ENCODE measurements at regions of chr3 and their contacts with region 1.

Region 1: DNA sequence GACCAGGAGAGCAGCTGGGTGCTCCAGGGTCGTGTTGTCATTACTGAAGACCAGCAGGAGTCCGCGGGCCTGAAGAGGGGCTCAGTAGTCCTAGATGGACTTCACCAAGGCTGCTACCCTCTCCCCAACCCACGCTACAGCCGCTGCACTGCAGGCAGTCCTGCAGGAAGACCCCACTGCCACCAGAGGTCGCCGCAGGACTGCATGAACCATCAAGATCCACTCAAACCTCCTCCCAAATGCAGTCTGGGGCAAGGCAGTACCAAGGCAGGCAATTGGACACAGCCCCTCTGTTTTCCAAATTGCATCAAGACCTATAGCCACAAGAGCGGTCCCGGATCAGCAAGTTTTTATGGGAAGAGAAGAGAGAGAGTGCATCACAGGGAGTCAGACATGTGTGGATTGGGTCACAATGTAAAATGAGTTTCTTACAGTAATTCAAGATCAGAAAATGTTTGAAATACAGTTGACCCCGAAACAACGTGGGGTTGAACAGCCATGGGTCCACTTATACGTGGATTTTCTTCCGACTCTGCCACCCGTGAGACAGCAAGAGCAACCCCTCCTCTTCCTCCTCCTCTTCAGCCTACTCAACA is 46.7 kb downstream of the DZIP1L start:
- DNase-seq: peak; percentile 63
- ATAC-seq: peak; percentile 98
- H3K4me3 ChIP-seq: no peak overlapping the region
- H3K27ac ChIP-seq: no peak overlapping the region
- H3K4me1 ChIP-seq: peaks cover 0 to 10% of the 10 kb centered on the region in 2 experiments; a peak in 2 of 4 replicates
- H3K27me3 ChIP-seq: no peaks in the 10 kb centered on the region
- CTCF ChIP-seq: peak; percentile 90 to 99 (median 99)
- POLR2A ChIP-seq: no peak
- RAD21 ChIP-seq: peak; percentile 99

Region 2: DNA sequence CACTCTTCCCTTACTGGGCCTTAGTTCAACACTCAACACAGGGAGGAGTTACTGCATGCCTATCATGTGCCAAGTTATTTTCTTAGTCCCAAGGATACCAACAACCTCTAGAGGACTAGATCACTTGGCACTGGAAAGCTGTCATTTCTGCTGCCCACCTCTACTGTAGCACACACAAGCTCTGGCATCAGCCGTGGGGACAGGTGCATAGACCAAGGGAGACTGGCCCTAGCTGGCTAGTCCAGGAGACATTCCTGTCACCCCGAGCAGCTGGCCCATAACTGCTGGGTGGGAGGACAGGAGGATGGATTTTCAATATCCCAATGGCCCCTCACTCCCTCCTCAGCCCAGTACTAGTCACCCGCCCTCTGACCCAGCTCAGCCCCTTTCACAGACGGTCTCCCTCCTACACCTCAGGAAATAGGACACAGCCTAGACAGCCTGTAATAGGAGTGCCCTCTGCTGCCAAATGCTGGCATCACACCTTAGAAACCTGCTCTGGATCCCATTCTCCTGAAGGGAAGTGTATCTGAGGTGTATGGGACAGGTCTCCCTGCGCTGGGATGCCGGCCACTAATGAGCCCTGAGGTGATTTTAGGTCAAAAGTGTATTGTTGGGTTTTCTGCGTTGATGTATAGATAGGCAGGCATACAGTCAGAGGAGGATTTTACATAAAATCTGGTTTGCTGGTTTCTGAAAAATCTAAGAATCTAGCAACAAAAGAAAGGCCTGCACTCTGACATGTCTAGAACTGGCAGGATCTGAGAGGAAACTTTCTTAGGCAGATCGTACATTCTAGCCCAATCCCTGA is 50.1 kb after region 1 on chr3:
- CTCF ChIA-PET with region 1: interaction called, 7 read pairs
- POLR2A ChIA-PET with region 1: interaction called, 3 read pairs
- RAD21 ChIA-PET with region 1: no interaction called
- intact Hi-C with region 1: loop called (anchors 1 kb)
- DNase-seq: peak; percentile 69
- ATAC-seq: peak; percentile 71
- H3K4me3 ChIP-seq: no peak overlapping the region
- H3K27ac ChIP-seq: no peak overlapping the region
- H3K4me1 ChIP-seq: peaks cover 13 to 23% of the 10 kb centered on the region in 2 experiments
- H3K27me3 ChIP-seq: no peaks in the 10 kb centered on the region
- CTCF ChIP-seq: peak; percentile 85 to 90 (median 87)
- POLR2A ChIP-seq: no peak
- RAD21 ChIP-seq: peak; percentile 94

Region 3: DNA sequence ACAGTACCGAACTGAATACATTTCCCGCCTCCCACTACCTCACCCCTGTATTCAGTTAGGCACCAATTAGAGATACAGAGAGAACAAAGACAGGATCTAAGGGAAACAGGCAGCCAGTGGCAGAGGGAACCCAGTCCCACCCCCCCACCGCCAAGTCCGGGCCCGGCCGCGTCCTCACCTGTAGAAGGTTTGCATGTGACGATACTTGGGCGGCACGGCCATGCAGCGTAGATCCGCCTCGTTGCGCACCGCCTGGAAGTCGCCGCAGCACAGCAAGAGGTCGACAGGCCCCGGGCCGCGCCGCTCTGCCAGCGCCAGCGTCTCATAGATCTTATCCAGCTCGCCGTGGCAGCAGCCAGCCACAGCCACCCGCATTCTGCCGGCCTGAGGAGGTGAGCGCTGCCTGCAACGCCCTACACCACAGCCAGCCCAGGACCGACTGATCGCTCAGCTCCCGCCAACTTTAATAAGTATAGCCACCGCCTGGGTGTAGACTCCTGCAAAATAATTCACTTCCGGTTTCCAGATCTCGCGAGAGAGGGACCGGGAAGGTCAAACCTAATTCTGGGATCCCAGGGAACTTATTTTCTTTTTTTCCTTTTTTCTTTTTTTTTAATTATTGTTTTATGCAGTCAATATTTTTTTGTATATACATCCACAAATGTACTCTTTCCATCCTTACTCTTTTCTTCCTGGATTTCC is 105.9 kb after region 1 on chr3 and contains the start of gene DBR1:
- CTCF ChIA-PET with region 1: no interaction called
- POLR2A ChIA-PET with region 1: no interaction called
- RAD21 ChIA-PET with region 1: no interaction called
- intact Hi-C with region 1: loop called (anchors 2 kb)
- DNase-seq: peak; percentile 78
- ATAC-seq: peak; percentile 93
- H3K4me3 ChIP-seq: peak within 1 kb of the TSS; percentile 47 to 81
- H3K27ac ChIP-seq: peak within 1 kb of the TSS; percentile 79
- H3K4me1 ChIP-seq: peaks cover 8 to 14% of the 10 kb centered on the region in 2 experiments; a peak in 3 of 4 replicates
- H3K27me3 ChIP-seq: no peaks in the 10 kb centered on the region
- CTCF ChIP-seq: no peak
- POLR2A ChIP-seq: peak; percentile 95
- RAD21 ChIP-seq: no peak
- total RNA-seq, gene DBR1: 21.6 TPM

Region 4: DNA sequence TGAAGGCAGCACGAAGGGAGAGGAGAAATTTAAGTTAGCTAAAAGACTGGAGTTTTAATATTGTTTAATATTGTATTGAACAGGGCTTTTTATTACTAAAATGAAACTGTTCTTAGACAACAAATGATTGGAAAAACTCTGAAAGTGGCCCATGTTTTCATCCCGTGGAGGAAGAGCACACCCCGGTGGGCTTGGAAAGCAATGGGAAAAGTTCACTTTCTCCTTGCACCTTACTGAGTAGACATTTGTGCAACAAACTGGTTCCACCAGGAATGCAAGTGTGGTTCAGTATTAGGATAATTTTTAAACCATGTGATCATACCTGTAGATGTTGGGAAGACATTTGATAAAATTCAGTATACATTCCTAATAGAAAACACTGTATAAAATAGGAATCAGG is 357.5 kb after region 1 on chr3:
- CTCF ChIA-PET with region 1: no interaction called
- POLR2A ChIA-PET with region 1: no interaction called
- RAD21 ChIA-PET with region 1: no interaction called
- intact Hi-C with region 1: loop called (anchors 2 kb)
- DNase-seq: peak; percentile 28
- ATAC-seq: peak; percentile 76
- H3K4me3 ChIP-seq: no peak overlapping the region
- H3K27ac ChIP-seq: no peak overlapping the region
- H3K4me1 ChIP-seq: no peaks in the 10 kb centered on the region
- H3K27me3 ChIP-seq: no peaks in the 10 kb centered on the region
- CTCF ChIP-seq: peak; percentile 54 to 68 (median 65); a peak in 5 of 6 replicates
- POLR2A ChIP-seq: no peak
- RAD21 ChIP-seq: peak; percentile 86

Region 5: GRCh38 chr3:139439278-139439677 is 1370.6 kb after region 1 on chr3:
- CTCF ChIA-PET with region 1: no interaction called
- POLR2A ChIA-PET with region 1: no interaction called
- RAD21 ChIA-PET with region 1: no interaction called
- intact Hi-C with region 1: no loop called
- DNase-seq: no peak
- ATAC-seq: no peak
- H3K4me3 ChIP-seq: no peak overlapping the region
- H3K27ac ChIP-seq: no peak overlapping the region
- H3K4me1 ChIP-seq: peaks cover 0 to 6% of the 10 kb centered on the region in 2 experiments; a peak in 2 of 4 replicates
- H3K27me3 ChIP-seq: no peaks in the 10 kb centered on the region
- CTCF ChIP-seq: no peak
- POLR2A ChIP-seq: no peak
- RAD21 ChIP-seq: no peak

Measured in HCT116 (cell line).